ENCODE measurements at regions of chr18 and their contacts with region 1.

Region 1: GRCh38 chr18:35143622-35144596 is 96.9 kb upstream of the ZNF397 start:
- DNase-seq: peak; percentile 65
- H3K4me3 Mint-ChIP-seq: no peak overlapping the region
- H3K27ac Mint-ChIP-seq: no peak overlapping the region
- H3K4me1 Mint-ChIP-seq: no peaks in the 10 kb centered on the region
- H3K27me3 Mint-ChIP-seq: no peaks in the 10 kb centered on the region
- CTCF ChIP-seq: peak; percentile 73

Region 2: GRCh38 chr18:34867520-34867919 is 276.4 kb before region 1 on chr18:
- CTCF ChIA-PET with region 1: interaction called, 26 read pairs
- POLR2A ChIA-PET with region 1: no interaction called
- intact Hi-C with region 1: loop called (anchors 2 kb)
- DNase-seq: no peak
- H3K4me3 Mint-ChIP-seq: no peak overlapping the region
- H3K27ac Mint-ChIP-seq: no peak overlapping the region
- H3K4me1 Mint-ChIP-seq: no peaks in the 10 kb centered on the region
- H3K27me3 Mint-ChIP-seq: no peaks in the 10 kb centered on the region
- CTCF ChIP-seq: peak; percentile 7

Region 3: GRCh38 chr18:34999756-35000289 is 144.1 kb before region 1 on chr18:
- CTCF ChIA-PET with region 1: interaction called, 27 read pairs
- POLR2A ChIA-PET with region 1: interaction called, 3 read pairs
- intact Hi-C with region 1: no loop called
- DNase-seq: no peak
- H3K4me3 Mint-ChIP-seq: no peak overlapping the region
- H3K27ac Mint-ChIP-seq: no peak overlapping the region
- H3K4me1 Mint-ChIP-seq: no peaks in the 10 kb centered on the region
- H3K27me3 Mint-ChIP-seq: peaks cover 20% of the 10 kb centered on the region
- CTCF ChIP-seq: no peak

Region 4: GRCh38 chr18:35029770-35030169 is 114.1 kb before region 1 on chr18:
- CTCF ChIA-PET with region 1: interaction called, 27 read pairs
- POLR2A ChIA-PET with region 1: no interaction called
- intact Hi-C with region 1: no loop called
- DNase-seq: no peak
- H3K4me3 Mint-ChIP-seq: no peak overlapping the region
- H3K27ac Mint-ChIP-seq: peak overlapping the region; percentile 20
- H3K4me1 Mint-ChIP-seq: peaks cover 6% of the 10 kb centered on the region
- H3K27me3 Mint-ChIP-seq: no peaks in the 10 kb centered on the region
- CTCF ChIP-seq: no peak

Region 5: GRCh38 chr18:35117951-35118411 is 25.9 kb before region 1 on chr18:
- CTCF ChIA-PET with region 1: interaction called, 12 read pairs
- POLR2A ChIA-PET with region 1: no interaction called
- intact Hi-C with region 1: no loop called
- DNase-seq: no peak
- H3K4me3 Mint-ChIP-seq: no peak overlapping the region
- H3K27ac Mint-ChIP-seq: no peak overlapping the region
- H3K4me1 Mint-ChIP-seq: no peaks in the 10 kb centered on the region
- H3K27me3 Mint-ChIP-seq: no peaks in the 10 kb centered on the region
- CTCF ChIP-seq: no peak

Region 6: DNA sequence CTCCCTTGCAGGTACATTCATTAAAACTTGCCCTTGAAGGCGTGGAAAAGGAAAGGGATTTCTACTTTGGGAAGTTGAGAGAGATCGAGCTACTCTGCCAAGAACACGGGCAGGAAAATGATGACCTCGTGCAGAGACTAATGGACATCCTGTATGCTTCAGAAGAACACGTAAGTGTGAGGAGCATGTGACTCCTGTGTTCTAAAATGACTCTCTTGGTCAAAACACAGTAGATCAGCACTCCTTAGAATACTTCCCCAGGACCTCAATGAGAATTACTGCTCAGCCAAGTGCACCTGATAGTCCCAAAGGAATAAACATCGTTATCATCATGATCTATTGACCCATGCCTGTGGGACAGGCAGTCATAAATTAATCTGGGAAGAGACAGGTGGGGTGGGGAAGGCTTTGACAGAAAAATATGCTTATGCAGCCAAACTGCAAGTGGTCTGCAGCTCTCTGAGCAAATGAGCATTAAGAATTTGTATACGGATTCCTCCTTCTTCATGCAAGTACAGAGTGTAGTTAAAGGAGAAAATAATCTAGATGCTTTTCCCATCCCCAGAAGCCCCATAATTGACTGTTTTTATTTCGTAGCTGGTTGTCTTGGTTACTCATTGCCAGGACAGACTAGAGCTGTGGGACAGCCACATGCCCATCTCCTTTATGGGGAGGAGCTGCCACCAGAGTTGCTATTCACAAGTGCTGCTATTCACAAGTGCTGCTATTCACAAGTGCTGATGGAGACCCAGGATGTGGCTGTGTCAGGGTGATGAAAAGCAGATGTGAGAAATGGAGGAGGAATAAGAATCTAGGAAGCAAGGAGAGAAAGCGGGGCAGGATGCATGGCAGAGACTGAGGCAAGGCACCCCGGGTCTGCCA is 11.6 kb before region 1 on chr18:
- CTCF ChIA-PET with region 1: interaction called, 18 read pairs
- POLR2A ChIA-PET with region 1: interaction called, 3 read pairs
- intact Hi-C with region 1: no loop called
- DNase-seq: peak; percentile 24
- H3K4me3 Mint-ChIP-seq: no peak overlapping the region
- H3K27ac Mint-ChIP-seq: peak overlapping the region; percentile 44
- H3K4me1 Mint-ChIP-seq: peaks cover 14% of the 10 kb centered on the region
- H3K27me3 Mint-ChIP-seq: no peaks in the 10 kb centered on the region
- CTCF ChIP-seq: no peak

Region 7: DNA sequence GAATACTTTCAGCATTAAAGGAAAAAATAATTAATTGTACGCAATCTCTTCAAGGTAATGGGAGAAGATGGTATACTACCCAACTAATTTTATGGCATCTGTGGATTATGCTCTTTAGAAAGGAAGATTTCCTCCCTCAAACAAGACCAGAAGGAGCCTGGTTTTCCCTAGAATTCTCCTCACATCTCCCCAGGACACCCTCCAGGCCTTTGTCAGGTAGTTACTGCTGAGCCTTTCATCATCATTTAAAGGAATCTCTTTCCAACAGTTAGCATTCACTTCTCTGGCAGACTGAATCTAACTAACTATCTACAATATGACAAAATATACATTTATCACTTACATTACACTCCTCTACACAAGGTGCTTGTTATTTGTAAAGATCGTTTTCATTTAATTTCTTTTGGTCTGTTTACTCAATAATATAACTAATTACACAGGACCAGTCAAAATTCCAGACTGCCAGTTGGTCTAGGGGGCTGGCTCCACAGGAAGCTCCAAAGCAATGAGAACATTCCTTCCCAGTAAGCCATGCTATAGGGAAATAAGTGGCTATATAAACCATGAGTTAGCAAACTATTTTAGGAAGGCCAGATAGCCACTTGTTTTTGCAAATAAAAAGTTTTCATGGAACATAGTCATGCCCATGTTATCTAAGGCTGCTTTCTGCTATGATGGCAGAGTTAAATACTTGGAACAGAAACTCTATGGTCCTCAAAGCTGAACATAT is 181.2 kb after region 1 on chr18:
- CTCF ChIA-PET with region 1: no interaction called
- POLR2A ChIA-PET with region 1: no interaction called
- intact Hi-C with region 1: no loop called
- DNase-seq: no peak
- H3K4me3 Mint-ChIP-seq: no peak overlapping the region
- H3K27ac Mint-ChIP-seq: no peak overlapping the region
- H3K4me1 Mint-ChIP-seq: no peaks in the 10 kb centered on the region
- H3K27me3 Mint-ChIP-seq: no peaks in the 10 kb centered on the region
- CTCF ChIP-seq: no peak